ENCODE measurements at regions of chr1 and their contacts with region 1.

Region 1: GRCh38 chr1:54810100-54810942 is 9.2 kb upstream of the TTC22 start:
- DNase-seq: peak; percentile 56
- H3K4me3 Mint-ChIP-seq: no peak overlapping the region
- H3K27ac Mint-ChIP-seq: no peak overlapping the region
- H3K4me1 Mint-ChIP-seq: peaks cover 25% of the 10 kb centered on the region
- H3K27me3 Mint-ChIP-seq: peaks cover 8% of the 10 kb centered on the region

Region 2: DNA sequence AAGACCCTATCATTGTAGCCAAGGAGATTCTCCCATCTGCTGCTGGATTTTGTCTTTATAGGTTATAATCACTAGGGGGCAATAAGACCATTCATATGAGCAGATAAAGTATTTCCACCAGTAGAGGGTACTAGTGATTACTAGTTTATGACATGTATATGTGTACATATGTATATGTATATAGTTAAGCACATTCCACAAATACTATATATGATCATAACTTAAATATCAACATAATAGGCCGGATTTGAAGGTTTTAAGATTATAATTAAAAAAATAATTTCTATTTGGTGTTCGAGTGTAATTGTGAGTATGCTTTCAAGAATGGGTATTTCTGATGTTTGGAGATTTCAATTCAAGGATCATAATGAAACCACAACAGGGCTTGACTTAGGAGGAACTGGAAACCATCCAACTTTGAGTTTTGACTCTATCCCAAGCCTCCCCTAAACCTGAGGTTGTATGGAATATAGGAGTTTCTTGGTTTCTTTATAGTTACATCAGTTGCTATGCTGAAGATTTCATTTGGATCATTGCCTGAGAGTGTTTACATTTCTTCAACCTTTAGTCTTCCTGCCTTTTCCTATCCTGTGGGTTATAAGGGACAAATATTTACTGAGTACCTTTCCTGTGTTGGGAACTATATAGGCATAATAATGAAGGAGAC is 740.0 kb before region 1 on chr1:
- intact Hi-C with region 1: loop called (anchors 1 kb)
- DNase-seq: no peak
- H3K4me3 Mint-ChIP-seq: no peak overlapping the region
- H3K27ac Mint-ChIP-seq: no peak overlapping the region
- H3K4me1 Mint-ChIP-seq: no peaks in the 10 kb centered on the region
- H3K27me3 Mint-ChIP-seq: no peaks in the 10 kb centered on the region

Region 3: DNA sequence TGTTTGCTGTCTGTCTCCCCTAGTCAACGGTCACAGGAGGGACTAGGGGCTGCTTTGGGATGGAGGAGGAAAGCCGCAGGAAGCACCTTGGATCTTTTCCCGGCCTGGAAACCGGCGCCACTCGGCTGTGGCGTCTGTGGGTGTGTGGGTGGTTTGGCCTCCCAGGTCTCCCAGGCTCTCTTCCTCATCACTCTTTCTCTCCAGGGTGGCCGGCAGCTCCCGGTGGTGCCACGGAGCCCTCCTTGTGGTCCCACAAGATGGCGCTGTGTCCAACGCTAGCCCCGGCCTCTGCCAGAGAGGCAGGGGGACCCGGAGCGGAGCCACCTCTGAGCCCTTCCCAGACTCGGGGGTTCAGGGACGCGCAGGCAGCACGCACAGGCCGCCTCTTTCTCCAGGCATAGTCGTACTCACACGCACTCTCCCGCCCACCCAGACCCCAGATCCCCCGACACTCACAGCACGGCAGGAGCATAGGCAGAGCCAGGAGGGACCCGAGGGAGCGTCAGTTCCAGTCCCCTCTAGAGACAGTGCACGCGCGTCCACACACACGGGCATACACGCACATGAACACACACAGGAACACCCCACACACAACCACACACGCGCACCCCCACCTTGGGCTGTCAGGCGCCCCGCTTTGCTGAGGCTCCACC is 688.7 kb before region 1 on chr1:
- intact Hi-C with region 1: loop called (anchors 1 kb)
- DNase-seq: peak; percentile 49
- H3K4me3 Mint-ChIP-seq: no peak overlapping the region
- H3K27ac Mint-ChIP-seq: no peak overlapping the region
- H3K4me1 Mint-ChIP-seq: no peaks in the 10 kb centered on the region
- H3K27me3 Mint-ChIP-seq: peaks cover 11% of the 10 kb centered on the region

Region 4: DNA sequence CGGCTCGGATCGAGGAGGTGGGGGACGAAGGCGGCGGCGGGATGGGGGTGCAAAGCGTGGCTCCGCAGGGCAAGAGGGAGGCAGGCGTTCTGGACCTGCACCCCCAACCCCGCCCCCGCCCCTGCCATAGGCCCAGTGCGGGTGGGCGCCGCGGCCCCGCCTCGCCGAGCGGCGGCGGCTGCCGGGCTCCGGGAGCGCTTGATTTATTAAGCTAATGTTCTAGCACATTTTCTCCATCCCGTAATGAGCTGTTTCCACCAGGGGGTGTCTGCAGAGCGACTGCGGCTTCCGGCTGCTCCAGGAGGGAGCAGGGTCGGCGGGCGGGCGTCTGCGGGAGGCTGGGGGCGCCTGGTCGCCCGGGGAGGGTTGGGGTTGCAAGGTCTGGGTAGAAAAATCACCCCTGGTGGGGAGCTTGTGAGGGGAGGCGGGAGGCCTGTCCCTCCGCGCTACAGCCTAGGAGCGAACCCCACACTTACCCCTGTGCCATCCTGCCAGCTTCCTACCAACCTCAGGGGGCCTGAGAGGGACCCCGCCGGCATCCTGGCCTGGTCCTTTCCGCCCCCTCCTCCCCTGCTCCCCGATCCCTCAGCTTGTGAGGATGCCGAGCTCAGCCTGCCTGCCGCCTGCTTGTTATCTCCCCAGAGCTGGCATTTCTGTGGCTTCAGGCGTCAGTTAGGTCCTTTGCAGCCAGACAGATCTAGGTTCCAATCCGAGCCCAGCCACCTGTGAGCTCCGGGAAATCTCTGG is 310.8 kb before region 1 on chr1:
- intact Hi-C with region 1: loop called (anchors 5 kb)
- DNase-seq: peak; percentile 12
- H3K4me3 Mint-ChIP-seq: peak overlapping the region; percentile 57
- H3K27ac Mint-ChIP-seq: no peak overlapping the region
- H3K4me1 Mint-ChIP-seq: peaks cover 11% of the 10 kb centered on the region
- H3K27me3 Mint-ChIP-seq: peaks cover 55% of the 10 kb centered on the region

Region 5: DNA sequence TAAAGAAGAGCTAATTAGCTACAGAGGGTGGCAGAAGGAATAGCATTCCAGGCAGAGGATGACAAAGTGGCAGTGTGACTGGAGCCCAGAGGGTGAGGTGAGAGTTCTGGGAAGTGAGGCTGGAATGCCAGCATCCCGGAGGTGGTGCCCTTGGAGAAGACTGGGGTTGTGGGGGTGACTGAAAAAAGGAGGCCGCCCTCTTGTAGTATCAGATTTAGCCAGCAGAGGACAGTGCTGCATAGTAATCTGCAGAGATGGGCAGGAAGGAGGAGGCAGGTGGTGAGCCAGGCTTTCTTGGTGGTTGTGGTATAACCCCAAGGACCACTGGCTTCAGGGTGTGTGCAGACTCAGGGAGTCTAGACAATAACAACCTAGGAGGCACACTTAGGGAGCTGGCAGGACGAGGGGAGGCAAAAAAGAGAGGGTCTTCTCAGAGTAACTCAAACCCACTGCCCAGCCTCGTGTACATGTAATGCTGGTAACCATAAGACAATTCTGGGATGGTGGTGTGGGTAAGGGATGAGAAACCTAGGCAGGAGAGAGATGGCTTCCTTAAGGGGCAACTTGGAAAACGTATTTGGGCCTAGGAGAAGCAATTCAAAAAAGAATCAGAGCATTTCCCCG is 138.2 kb before region 1 on chr1:
- intact Hi-C with region 1: loop called (anchors 1 kb)
- DNase-seq: peak; percentile 59
- H3K4me3 Mint-ChIP-seq: no peak overlapping the region
- H3K27ac Mint-ChIP-seq: no peak overlapping the region
- H3K4me1 Mint-ChIP-seq: no peaks in the 10 kb centered on the region
- H3K27me3 Mint-ChIP-seq: peaks cover 6% of the 10 kb centered on the region

Region 6: DNA sequence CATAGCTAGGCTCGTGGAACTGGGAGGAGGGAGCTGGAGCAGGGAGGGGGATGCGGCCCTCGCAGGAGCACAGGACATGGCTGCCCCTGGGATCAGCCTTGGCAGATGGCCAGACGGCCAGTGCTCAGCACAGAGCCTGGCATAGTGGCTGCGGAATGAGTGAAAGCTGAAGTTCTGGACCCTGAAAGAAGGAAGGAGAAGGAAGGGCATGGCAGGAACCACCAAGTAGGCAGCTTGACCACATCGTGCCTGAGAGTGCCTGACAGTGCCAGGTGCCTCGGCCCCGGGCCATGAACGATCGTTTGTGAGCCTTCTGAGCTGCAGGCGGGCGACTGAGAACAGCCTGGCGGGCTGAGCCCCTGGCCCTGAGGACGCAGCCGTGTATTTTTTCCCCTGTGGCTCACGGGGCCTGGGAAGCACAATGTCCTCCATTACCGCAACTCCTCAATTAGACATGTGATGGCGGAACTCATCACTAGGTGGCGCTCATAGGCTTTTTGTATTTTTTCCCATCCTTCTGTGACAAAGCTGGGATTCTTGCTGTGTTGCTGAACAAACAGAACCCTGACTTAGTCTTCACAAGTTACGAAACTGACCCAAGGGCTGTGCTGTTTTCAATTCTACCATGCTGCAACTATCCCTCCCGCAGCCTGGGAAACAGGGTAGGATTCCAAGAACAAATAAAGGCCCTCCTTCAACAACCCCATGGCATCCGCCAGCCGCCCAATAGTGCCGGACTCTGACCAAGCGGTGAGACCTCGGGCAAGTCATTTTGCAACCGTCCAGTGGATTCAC is 140.2 kb after region 1 on chr1:
- intact Hi-C with region 1: no loop called
- DNase-seq: peak; percentile 38
- H3K4me3 Mint-ChIP-seq: no peak overlapping the region
- H3K27ac Mint-ChIP-seq: no peak overlapping the region
- H3K4me1 Mint-ChIP-seq: peaks cover 17% of the 10 kb centered on the region
- H3K27me3 Mint-ChIP-seq: peaks cover 9% of the 10 kb centered on the region

Region 7: DNA sequence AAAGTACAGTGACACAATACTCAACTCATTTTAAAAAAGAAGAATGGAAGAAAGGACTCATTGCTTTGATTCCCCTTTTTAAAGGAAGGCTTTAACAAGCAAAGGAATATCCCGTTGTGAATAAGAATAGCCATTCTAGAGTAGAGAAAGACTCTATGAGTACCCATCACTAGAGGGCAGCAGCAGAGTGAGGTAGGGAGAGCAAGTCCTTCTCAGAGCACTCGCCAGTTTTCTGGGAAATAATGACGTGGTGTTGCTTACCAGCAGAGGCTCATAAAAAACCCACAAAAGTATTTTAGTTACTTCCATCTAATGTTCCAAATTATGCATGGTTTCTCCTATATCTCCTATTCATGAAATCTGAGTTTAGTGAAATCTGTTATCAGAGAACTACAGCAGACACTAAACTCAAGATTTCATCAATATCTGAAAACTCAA is 330.2 kb after region 1 on chr1:
- intact Hi-C with region 1: no loop called
- DNase-seq: peak; percentile 66
- H3K4me3 Mint-ChIP-seq: no peak overlapping the region
- H3K27ac Mint-ChIP-seq: peak overlapping the region; percentile 51
- H3K4me1 Mint-ChIP-seq: peaks cover 23% of the 10 kb centered on the region
- H3K27me3 Mint-ChIP-seq: no peaks in the 10 kb centered on the region

Measured in activated T-helper 1 cell treated with anti-CD3 and anti-CD28 coated beads, Interleukin-12 subunit alpha, Interleukin-12 subunit beta, Interleukin-2, Interleukin-4 antibody, amounts not matched to agents 30 ng/mL and 10 ng/mL and 1 ng/mL, durations not matched to agents 14 hours and 24 hours and 36 hours (primary cell).